Lower leg skin (tissue), 4 donors: ENCODE measurements at regions of chr20 and their contacts with region 1.

Region 1: GRCh38 chr20:48657475-48658470 is 170.0 kb downstream of the PREX1 start:
- DNase-seq: peak; percentile 63 to 90
- H3K4me3 ChIP-seq: no peak overlapping the region
- CTCF ChIP-seq: peak in 1 of 3 donors; percentile 91
- POLR2A ChIP-seq: no peak

Region 2: DNA sequence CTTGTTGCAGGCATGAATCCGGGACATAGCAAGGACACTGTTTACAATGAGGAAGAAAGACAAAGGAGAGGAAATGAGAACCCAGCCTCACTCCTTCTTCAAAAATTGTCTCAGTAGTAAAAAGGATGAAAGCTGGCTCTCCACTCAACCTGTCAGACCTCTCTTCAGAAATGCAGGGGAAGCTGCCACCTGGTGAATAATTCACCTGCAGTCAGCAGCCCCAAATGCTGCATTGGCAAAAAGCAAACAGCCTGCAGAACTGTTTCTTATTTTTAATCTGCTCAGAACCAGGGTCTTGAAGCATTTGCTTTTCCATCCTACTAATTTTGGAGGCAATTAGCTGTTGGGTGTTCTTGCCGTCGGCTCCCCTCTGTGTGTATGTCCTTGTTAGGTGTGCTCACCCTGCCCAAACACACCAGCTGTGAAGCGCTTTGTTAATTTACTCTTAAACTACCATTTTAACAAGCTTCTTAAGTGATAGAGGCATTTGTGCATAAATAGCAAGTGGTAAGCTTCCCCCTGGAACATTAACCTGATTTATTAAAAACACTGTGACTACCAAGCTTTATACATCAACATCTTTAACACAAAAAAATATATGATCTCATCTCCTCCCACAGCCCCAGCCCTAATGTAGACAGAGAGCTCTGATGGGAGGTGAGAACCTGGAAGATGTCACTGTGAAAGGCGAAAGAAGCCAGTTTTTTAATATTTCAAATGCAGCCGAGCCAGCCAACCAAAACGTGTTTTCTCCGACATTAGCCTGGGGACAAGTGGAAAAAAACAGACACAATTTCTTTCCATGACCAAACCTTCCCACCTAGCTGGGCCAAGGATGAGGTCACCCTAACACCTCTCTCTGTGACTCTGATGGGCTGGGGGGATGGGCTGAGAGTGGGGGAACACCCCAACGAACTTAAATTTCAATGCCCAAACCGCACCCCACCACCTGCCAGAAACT is 421.5 kb before region 1 on chr20:
- intact Hi-C with region 1: no loop called
- DNase-seq: no peak
- H3K4me3 ChIP-seq: no peak overlapping the region
- CTCF ChIP-seq: no peak
- POLR2A ChIP-seq: no peak

Region 3: DNA sequence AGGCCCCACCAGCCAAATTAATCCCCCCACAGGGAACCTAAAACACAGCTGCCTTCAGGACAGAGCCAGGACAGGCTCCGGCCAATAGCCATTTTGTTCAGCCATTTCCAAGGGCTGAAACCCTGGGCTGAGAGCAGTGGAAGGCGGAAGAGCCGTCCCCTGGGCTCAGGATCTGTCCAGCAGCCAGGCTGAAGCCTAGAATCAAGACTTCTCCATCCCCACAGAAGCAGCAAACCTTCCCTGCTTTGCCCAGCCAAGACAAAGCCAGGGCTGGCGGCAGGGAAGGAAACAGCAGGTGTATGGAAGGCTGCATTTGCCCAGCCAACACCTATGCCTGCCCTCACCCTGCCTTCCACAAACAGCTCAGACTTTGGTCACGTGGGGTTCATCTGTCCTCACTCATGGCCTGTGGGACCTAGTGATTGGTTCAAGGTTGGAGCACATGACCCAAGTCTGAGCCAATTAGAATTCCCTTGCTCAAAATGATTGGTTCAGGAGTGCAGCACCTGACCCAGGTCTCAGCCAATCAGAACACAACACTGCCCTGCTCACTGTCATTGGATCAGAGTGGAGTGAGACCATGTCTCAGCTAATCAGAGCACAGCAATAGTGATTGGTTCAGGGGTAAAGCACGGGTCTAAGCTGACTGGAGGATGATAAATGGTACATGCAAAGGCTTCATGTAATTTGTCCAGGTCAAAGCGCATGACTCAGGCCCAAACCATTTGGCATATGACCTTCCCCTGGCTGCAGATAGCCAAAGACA is 67.6 kb after region 1 on chr20:
- intact Hi-C with region 1: no loop called
- DNase-seq: no peak
- H3K4me3 ChIP-seq: no peak overlapping the region
- CTCF ChIP-seq: no peak
- POLR2A ChIP-seq: no peak

Region 4: GRCh38 chr20:48904365-48905296 is 246.9 kb after region 1 on chr20:
- intact Hi-C with region 1: loop called (anchors 2 kb)
- DNase-seq: peak; percentile 62 to 88
- H3K4me3 ChIP-seq: no peak overlapping the region
- CTCF ChIP-seq: peak in 1 of 3 donors; percentile 39
- POLR2A ChIP-seq: no peak